ENCODE measurements at regions of chr11 and their contacts with region 1.

Region 1: GRCh38 chr11:18115360-18116127 is 9.7 kb upstream of the SAAL1 start:
- DNase-seq: peak; percentile 81
- CTCF ChIP-seq: peak; percentile 80

Region 2: DNA sequence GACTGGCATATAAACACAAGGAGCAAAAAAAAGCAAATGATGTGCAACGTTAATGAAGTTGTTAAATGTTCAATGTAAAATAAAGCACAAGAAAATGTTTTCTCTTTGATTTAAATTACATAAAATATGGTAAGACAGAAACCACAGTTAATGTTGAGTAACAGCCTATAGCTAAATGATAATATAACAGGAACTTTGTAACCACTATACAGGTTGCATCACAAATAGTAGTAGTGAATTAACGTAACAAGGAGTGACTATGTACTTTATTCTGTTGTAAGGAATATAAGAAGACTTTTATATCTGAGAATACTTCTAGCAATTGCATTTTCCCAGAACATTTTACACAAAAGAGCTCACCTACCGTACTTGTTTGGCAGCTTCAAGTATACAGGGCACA is 26.6 kb before region 1 on chr11:
- CTCF ChIA-PET with region 1: interaction called, 16 read pairs
- POLR2A ChIA-PET with region 1: no interaction called
- DNase-seq: no peak
- CTCF ChIP-seq: no peak

Region 3: GRCh38 chr11:18203723-18204122 is 88.2 kb after region 1 on chr11:
- CTCF ChIA-PET with region 1: interaction called, 56 read pairs
- POLR2A ChIA-PET with region 1: no interaction called
- DNase-seq: peak; percentile 64
- CTCF ChIP-seq: peak; percentile 31

Region 4: DNA sequence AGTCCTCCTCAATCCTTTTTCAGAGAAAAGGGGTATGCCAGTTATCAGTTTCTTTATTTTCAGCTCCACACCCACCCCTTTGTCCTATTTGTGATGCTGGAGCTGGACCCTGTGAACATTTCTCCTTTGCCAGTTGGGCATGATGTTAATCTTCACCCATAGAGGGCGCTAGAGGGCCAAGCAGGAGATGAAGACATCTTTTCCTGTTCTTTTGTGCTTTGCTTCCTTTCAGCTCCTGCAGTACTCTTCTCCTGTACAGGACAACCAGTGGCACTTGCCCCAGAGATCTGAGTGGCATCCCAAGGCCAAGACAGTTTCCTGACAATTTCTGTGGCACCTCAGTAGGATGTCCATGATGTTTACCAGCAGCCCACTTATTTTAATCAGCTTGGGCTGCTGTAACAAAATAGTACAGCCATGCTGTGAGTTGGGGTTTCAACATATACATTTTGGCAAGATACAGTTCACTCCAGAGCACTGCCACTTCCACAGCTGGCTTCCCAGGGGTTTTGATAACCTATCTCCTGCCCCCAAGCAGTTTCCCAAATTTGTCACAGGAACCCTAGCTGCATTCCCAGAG is 128.3 kb after region 1 on chr11:
- CTCF ChIA-PET with region 1: interaction called, 15 read pairs
- POLR2A ChIA-PET with region 1: no interaction called
- DNase-seq: peak; percentile 54
- CTCF ChIP-seq: peak; percentile 91

Region 5: DNA sequence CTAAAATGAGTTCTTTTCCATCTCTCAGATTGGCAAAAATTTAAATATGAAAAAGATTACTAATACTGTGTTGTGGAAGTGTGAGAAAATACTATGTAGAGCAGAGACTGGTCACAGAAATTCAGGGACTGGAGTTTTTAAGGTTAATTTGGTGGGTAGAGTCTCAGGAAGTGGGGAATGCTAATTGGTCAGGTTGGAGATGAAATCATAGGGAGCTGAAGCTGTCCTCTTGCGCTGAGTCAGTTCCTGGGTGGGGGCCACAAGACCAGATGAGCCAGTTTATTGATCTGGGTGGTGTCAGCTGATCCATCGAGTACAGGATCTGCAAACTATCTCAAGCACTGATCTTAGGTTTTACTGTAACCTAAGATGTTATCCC is 553.7 kb after region 1 on chr11:
- CTCF ChIA-PET with region 1: no interaction called
- POLR2A ChIA-PET with region 1: no interaction called
- DNase-seq: no peak
- CTCF ChIP-seq: no peak

Region 6: DNA sequence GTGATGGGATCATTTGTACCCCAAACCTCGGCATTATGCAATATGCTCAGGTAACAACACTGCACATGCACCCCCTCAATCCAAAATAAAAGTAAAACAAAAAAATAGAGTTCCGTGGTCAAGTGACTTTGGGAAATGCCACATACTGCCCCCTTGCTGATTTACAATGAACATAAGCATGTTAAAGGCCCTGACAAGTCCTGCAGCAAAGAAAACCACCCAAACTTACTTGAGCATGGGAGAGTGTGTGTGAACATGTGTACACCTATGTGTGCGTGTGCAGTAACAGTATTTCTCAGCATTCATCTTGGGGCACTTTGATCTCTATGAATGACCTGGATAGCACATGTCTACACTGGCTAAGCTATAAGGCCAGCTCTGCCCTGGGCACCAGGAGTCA is 626.2 kb after region 1 on chr11:
- CTCF ChIA-PET with region 1: interaction called, 13 read pairs
- POLR2A ChIA-PET with region 1: no interaction called
- DNase-seq: no peak
- CTCF ChIP-seq: no peak

Region 7: GRCh38 chr11:18802381-18803257 is 687.1 kb after region 1 on chr11:
- CTCF ChIA-PET with region 1: interaction called, 11 read pairs
- POLR2A ChIA-PET with region 1: no interaction called
- DNase-seq: peak; percentile 53
- CTCF ChIP-seq: peak; percentile 52

Measured in GM10248 (cell line).